Sciatic nerve (tissue), 2 donors: ENCODE measurements at regions of chr19 and their contacts with region 1.

Region 1: GRCh38 chr19:1000095-1000494 is at the start of gene GRIN3B:
- DNase-seq: no peak
- ATAC-seq: no peak
- total RNA-seq, gene GRIN3B: not detected

Region 2: DNA sequence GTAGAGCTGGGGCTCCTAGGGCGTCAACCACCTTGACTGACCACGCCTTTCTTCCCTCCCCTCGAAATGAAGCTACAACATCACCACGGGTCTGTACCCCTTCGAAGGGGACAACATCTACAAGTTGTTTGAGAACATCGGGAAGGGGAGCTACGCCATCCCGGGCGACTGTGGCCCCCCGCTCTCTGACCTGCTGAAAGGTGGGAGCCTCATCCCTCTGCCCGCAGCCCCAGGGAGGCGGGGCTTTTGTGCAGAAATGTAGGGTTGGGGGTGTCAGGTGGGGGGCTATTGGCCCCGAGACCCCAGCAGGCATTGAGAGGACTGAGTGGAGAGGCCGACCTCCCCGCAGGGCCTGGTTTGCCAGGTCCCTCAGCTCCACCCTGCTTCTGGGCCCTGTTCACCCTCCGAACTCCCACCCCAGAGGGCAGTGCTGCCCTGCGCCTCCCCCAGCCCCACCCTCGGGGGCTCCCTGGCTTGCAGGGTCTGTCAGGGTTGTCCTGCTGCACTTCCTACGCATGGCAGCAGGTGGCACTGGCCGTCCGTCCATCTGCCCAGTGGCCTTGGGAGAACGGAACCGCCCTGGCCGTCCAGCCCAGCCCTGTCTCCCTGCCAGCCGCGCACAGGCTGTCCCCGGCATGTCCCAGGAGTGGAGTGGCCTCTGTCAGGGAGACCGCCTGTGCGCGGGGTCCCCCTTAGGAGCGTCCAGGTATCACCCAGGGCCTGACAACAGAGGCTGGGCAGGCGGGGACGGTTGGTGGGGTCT is 221.2 kb after region 1 on chr19:
- intact Hi-C with region 1: loop called (anchors 1 kb)
- DNase-seq: peak; percentile 84
- ATAC-seq: peak; percentile 63